Activated naive CD4-positive, alpha-beta T cell treated with anti-CD3 and anti-CD28 coated beads, Interleukin-2, amount 10 ng/mL, durations not matched to agents 7 days and 5 days (primary cell): ENCODE measurements at regions of chr12 and their contacts with region 1.

Region 1: DNA sequence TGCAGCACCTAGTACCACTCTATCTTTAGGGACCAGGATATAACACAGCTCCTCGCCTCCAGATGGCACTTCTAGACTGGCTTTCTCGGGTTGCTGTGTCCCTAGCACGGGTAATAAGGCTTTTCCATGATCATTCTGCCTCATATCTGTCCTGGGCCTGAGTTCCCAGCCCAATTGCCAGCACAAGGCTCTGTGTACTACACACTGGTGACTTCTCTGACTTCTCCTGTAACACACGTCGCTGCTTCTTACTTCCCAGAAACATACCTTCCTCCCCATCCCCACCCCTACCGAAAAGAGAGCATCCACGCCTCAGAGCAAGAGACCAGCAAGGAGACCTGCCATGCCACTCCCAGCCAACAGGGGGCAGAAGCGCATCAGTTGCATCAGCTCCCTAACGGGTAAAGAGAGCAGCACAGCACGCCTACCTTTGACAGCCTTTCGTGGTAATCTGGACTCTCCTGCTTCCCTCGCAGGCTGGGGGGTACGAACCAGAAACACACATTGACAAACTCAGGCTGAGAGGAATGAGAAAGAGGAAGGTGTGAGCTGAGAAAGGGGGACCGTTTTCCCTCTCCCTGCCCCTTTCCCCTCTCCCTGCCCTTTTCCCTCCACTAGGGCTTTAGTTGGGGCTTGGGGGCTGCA is 21.2 kb upstream of the ZNF740 start:
- DNase-seq: peak; percentile 94
- H3K4me3 Mint-ChIP-seq: no peak overlapping the region
- H3K27ac Mint-ChIP-seq: peak overlapping the region; percentile 15
- H3K4me1 Mint-ChIP-seq: peaks cover 10% of the 10 kb centered on the region
- H3K27me3 Mint-ChIP-seq: no peaks in the 10 kb centered on the region

Region 2: DNA sequence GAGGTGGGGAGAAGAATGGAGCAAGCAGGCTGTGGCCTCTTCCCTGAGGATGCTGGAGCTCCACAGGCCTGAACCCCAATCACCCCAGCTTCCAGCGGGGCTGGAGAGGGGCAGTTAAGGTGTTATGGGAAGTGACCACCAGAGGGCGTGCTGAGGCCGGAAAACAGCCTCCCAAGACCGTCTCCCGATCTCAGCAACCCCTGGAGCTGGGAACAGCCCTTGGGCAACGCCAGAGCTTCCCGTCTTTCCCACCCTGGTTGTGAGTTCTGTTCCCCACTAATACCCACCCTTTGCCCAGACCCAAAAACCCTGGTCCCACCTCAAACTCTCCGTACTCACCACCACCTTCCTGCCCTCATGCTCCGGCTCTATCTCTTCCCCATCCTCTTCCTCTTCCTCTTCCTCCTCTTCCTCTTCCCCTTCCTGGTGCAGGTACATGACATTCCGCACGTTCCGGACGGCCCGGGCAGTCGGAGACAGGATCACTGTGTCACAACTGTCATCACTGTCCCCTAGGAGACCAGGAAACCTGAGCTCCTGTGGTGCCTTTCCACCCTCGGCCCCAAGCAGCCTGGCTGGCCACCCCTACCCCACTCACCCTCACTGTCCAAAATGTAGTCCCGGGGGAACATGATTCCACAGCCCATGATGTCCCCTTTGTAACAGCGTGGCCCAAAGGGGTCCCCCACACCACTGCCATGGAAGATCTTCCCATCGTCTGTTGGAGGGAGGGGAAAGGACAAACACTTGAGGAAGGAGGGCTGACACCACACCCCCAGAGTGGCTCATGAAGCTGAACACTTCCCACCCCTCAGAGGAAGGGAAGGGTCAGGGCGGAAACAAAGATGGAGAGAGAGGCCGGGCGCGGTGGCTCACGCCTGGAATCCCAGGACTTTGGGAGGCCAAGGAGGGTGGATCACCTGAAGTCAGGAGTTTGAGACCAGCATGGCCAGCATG is 93.1 kb before region 1 on chr12:
- CTCF ChIA-PET with region 1: interaction called, 23 read pairs
- DNase-seq: peak; percentile 78
- H3K4me3 Mint-ChIP-seq: no peak overlapping the region
- H3K27ac Mint-ChIP-seq: no peak overlapping the region
- H3K4me1 Mint-ChIP-seq: peaks cover 5% of the 10 kb centered on the region
- H3K27me3 Mint-ChIP-seq: peaks cover 3% of the 10 kb centered on the region

Region 3: GRCh38 chr12:53190108-53190729 is 30.9 kb after region 1 on chr12:
- CTCF ChIA-PET with region 1: interaction called, 22 read pairs
- DNase-seq: peak; percentile 62
- H3K4me3 Mint-ChIP-seq: no peak overlapping the region
- H3K27ac Mint-ChIP-seq: peak overlapping the region; percentile 19
- H3K4me1 Mint-ChIP-seq: peaks cover 27% of the 10 kb centered on the region
- H3K27me3 Mint-ChIP-seq: no peaks in the 10 kb centered on the region

Region 4: GRCh38 chr12:53205747-53206419 is 46.6 kb after region 1 on chr12:
- CTCF ChIA-PET with region 1: interaction called, 69 read pairs
- DNase-seq: peak; percentile 79
- H3K4me3 Mint-ChIP-seq: peak overlapping the region; percentile 84
- H3K27ac Mint-ChIP-seq: peak overlapping the region; percentile 81
- H3K4me1 Mint-ChIP-seq: peaks cover 93% of the 10 kb centered on the region
- H3K27me3 Mint-ChIP-seq: no peaks in the 10 kb centered on the region

Region 5: GRCh38 chr12:53251477-53252348 is 92.4 kb after region 1 on chr12:
- CTCF ChIA-PET with region 1: interaction called, 16 read pairs
- DNase-seq: peak; percentile 85
- H3K4me3 Mint-ChIP-seq: peak overlapping the region; percentile 96
- H3K27ac Mint-ChIP-seq: peak overlapping the region; percentile 89
- H3K4me1 Mint-ChIP-seq: peaks cover 48% of the 10 kb centered on the region
- H3K27me3 Mint-ChIP-seq: peaks cover 6% of the 10 kb centered on the region

Region 6: GRCh38 chr12:53287741-53288216 is 128.5 kb after region 1 on chr12:
- CTCF ChIA-PET with region 1: interaction called, 10 read pairs
- DNase-seq: peak; percentile 82
- H3K4me3 Mint-ChIP-seq: no peak overlapping the region
- H3K27ac Mint-ChIP-seq: peak overlapping the region; percentile 65
- H3K4me1 Mint-ChIP-seq: peaks cover 4% of the 10 kb centered on the region
- H3K27me3 Mint-ChIP-seq: no peaks in the 10 kb centered on the region

Region 7: DNA sequence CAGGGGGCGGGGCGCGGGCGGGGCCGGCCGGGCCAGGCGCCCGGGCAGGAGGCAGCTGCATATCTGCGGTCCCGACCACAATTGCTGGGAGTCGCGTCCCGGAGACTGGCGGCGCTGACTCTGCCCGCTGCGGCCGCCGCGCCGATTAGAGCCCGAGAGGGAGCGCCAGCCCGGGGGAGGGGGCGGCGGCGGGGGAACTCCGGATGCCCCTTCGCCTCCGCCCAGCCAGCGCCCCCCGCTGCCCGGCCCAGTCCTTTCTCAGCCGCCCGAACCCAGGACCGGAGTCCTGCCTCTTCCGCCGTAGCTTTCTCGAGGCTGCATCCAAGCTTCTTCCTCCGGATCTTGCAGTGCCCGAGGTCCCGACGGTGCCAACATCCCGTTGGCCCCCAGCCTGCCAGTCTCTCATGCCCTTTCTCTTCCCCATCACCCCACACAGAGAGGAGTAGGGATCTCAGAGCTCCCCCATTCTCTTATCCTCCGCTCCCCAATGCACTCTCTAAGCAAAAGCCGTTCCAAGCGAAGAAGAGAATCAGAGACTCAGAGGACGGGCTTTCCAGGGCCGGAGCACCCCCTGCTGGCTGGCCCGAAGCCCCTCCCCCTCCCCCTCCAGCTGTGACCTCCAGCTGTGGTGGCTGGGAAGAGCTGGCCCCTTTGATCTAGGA is 185.6 kb after region 1 on chr12:
- CTCF ChIA-PET with region 1: interaction called, 14 read pairs
- DNase-seq: peak; percentile 81
- H3K4me3 Mint-ChIP-seq: peak overlapping the region; percentile 95
- H3K27ac Mint-ChIP-seq: peak overlapping the region; percentile 75
- H3K4me1 Mint-ChIP-seq: peaks cover 16% of the 10 kb centered on the region
- H3K27me3 Mint-ChIP-seq: peaks cover 42% of the 10 kb centered on the region